Activated naive CD4-positive, alpha-beta T cell treated with anti-CD3 and anti-CD28 coated beads, Interleukin-2, amount 10 ng/mL, durations not matched to agents 7 days and 5 days (primary cell): ENCODE measurements at regions of chr1 and their contacts with region 1.

Region 1: DNA sequence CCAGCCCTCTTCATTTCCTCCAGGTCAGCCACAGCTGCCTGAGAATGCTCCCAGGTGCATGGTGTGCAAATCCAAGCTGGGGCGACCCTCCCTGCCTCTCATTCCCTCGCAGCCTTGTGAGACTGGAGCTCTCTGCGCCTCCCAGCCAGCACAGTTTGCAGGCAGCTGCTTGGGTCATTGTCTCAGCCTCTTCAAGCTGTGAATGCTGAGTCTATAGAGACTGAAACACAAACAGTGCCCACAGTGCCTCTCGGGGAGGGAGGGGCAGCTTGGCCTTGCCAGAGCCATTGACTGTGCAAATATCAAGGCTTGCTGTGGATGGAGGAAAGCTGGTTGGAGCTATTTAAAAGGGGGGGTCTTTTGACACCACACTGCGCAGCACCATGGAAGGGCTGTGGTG is 10.6 kb downstream of the PLXNA2 start:
- DNase-seq: no peak
- H3K4me3 Mint-ChIP-seq: no peak overlapping the region
- H3K27ac Mint-ChIP-seq: no peak overlapping the region
- H3K4me1 Mint-ChIP-seq: peaks cover 19% of the 10 kb centered on the region
- H3K27me3 Mint-ChIP-seq: peaks cover 88% of the 10 kb centered on the region

Region 2: DNA sequence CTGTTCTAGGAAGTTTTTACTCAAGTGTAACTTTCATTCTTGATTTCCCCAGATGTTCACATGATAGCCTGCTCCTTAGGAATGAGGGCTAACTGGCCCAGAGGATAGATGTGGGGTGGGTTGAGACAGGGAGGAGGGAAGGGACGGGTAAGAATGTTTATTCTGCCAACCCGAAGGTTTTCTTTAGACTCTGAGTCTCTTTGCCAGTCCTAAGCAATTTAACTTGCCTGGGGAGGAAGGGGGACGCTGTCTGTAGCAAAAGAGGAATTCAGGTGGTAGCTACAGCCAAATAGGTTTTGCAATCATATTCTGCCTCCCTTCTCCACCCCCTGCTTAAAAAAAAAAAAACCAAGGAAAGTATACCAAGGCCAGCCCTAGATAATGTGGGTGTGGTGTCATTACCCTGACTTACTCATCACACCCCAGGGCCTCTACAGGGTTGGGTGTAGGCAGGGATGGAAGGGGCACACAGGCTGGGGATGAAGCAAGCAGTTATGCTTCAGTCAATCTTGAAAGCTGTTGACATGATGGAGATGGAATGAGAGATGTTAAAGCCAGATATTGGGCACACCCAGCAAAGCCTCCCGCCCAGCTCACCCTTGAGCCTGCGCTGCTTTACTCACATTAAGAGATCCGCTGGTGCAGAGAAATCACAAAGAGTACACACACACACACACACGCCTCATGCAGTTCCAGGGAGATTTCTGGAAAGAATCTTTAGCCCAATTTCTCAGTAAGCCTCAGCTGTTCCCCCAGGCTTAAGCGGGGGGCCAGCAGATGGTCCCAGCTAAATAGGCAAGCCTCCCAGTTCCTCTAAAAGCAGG is 49.2 kb before region 1 on chr1:
- CTCF ChIA-PET with region 1: no interaction called
- DNase-seq: no peak
- H3K4me3 Mint-ChIP-seq: no peak overlapping the region
- H3K27ac Mint-ChIP-seq: no peak overlapping the region
- H3K4me1 Mint-ChIP-seq: peaks cover 4% of the 10 kb centered on the region
- H3K27me3 Mint-ChIP-seq: peaks cover 37% of the 10 kb centered on the region

Region 3: DNA sequence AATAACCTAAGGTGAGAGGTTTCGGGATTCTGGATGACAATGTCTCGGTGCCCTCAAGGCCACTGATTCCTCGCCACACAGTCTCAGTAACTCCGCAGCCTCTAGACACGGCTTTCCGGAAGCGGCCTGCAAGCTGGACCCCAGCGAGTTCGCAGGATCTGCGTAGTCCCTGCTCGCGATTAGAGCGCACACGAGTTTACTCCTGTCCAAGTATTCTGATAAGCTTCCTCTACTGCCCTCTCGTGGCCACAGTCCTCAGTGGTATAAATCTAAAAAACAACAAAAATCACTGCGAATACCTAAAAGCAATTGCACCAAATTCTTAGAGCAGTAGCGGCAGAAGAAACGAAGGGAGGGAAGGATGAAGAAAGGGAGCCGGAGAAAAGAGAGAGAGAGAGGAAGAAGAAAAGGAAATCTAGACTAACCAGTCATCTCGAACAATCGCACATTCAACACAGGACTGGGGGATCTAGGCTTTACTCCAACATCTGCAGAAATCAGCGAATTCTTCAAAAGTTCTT is 11.7 kb after region 1 on chr1:
- CTCF ChIA-PET with region 1: interaction called, 11 read pairs
- DNase-seq: peak; percentile 85
- H3K4me3 Mint-ChIP-seq: peak overlapping the region; percentile 63
- H3K27ac Mint-ChIP-seq: no peak overlapping the region
- H3K4me1 Mint-ChIP-seq: peaks cover 10% of the 10 kb centered on the region
- H3K27me3 Mint-ChIP-seq: peaks cover 77% of the 10 kb centered on the region